Activated CD4-positive, alpha-beta memory T cell treated with anti-CD3 and anti-CD28 coated beads, Interleukin-2, amount 10 ng/mL, durations not matched to agents 7 days and 5 days (primary cell): ENCODE measurements at regions of chr1 and their contacts with region 1.

Region 1: DNA sequence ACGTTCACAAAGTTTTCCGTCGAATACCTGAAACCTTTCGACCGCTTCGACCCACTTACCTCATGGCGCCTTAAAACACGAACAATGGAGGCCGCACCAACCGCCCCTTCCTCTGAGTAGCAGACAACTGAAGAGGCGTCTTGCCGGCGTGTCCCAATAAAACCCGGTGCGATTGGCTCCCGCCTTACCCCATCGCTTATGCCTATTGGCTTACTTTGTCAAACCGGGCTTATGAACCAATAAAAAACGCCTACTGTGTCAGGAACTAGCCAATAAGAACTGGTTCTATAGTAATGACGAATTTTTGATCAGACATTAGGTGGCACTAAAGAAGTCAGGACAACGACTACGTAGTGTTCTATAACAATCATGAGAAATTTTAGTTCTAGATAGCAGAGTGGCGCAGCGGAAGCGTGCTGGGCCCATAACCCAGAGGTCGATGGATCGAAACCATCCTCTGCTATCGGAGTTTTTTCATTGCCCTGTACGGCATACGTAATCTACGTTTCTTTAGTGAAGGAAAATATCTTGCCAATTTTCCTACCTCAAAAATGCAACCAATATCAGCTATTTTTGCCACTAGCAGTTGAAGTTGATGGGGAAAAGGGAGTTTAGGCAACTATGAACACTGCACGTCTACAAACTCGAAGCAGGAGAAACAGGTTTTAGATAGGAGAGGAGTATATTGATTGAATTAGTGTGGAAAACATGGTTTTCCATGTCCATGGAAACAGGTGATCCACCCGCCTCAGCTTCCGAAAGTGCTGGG is at the start of gene ILF2:
- DNase-seq: peak; percentile 98
- H3K4me3 Mint-ChIP-seq: no peak within 1 kb of the TSS
- H3K27ac Mint-ChIP-seq: no peak within 1 kb of the TSS
- H3K4me1 Mint-ChIP-seq: peaks cover 40% of the 10 kb centered on the region
- H3K27me3 Mint-ChIP-seq: no peaks in the 10 kb centered on the region
- total RNA-seq, gene ILF2: 166 to 169 TPM

Region 2: DNA sequence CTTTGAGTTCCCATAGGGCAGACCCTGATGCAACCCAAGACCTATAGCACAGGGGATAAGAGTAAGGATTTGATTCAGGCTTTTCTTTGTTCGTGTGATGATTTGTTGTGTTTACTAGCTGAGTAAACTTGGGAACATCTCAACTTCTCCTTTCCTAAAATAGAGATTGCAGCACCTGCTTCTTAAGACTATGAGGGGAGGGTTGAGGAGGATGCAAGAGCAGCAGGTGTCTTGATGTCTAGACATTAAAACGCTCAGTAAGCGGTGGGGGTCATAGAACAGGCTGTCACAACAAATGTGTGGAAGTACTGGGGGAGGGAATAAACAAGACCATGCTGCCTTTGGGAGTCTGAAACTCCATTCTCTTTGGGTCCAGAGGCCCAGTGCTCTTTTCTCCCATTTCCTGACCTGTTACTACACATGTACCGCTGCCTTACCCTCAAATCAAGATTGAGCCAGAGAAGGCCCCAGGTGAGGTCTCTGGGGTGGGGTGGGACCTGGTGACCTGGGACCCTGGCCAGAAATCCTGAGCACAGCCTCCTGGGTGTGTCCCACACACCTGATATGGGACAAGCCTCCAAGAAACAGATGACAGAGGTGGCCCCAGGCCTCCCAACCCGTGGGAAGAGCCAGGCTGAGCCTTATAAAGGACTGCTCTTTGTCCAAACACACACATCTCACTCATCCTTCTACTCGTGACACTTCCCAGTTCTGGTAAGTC is 255.0 kb before region 1 on chr1 and contains the start of gene S100A7A:
- CTCF ChIA-PET with region 1: no interaction called
- POLR2A ChIA-PET with region 1: no interaction called
- DNase-seq: no peak
- H3K4me3 Mint-ChIP-seq: no peak within 1 kb of the TSS
- H3K27ac Mint-ChIP-seq: no peak within 1 kb of the TSS
- H3K4me1 Mint-ChIP-seq: no peaks in the 10 kb centered on the region
- H3K27me3 Mint-ChIP-seq: peaks cover 7% of the 10 kb centered on the region
- total RNA-seq, gene S100A7A: not detected

Region 3: DNA sequence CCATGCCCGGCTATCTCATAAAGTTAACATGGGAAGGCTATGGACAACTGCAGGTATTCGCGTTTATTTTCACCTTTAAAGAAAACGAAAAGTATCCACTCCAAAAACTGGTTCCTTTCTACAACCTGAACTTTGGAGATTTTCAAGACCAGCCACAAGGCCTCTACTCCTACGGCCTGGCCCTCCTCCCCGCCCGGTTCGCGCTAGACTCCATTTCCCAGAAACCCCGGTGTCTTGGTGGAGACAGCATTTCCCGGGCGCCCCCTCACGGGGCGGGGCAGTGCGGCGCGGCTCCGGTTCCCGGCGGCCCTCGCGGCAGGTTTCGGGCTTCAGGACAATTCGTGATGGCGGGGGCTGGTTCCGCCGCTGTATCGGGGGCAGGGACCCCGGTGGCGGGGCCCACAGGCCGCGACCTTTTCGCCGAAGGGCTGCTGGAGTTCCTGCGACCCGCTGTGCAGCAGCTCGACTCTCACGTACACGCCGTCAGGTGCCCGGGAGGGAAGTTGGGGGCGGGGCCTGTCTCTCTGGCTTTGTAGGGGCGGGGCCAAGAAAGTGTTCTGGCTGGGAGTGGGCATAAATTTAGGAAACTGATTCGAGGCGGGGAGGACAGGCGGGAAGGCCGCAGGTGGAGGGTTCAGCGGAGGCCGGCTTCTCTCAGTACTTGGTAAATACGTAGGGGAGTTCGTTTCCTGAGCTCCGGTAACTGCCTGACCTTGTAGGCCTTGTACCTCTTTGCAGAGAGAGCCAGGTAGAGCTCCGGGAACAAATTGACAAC is 12.5 kb before region 1 on chr1 and contains the start of gene SNAPIN:
- CTCF ChIA-PET with region 1: interaction called, 4 read pairs
- POLR2A ChIA-PET with region 1: interaction called, 16 read pairs
- DNase-seq: peak; percentile 93
- H3K4me3 Mint-ChIP-seq: peak within 1 kb of the TSS; percentile 95
- H3K27ac Mint-ChIP-seq: peak within 1 kb of the TSS; percentile 90
- H3K4me1 Mint-ChIP-seq: peaks cover 24% of the 10 kb centered on the region
- H3K27me3 Mint-ChIP-seq: no peaks in the 10 kb centered on the region
- total RNA-seq, gene SNAPIN: 35.0 to 35.6 TPM

Region 4: GRCh38 chr1:153688276-153688675 is 17.2 kb after region 1 on chr1:
- CTCF ChIA-PET with region 1: no interaction called
- POLR2A ChIA-PET with region 1: no interaction called
- DNase-seq: no peak
- H3K4me3 Mint-ChIP-seq: no peak overlapping the region
- H3K27ac Mint-ChIP-seq: no peak overlapping the region
- H3K4me1 Mint-ChIP-seq: no peaks in the 10 kb centered on the region
- H3K27me3 Mint-ChIP-seq: peaks cover 16% of the 10 kb centered on the region

Region 5: DNA sequence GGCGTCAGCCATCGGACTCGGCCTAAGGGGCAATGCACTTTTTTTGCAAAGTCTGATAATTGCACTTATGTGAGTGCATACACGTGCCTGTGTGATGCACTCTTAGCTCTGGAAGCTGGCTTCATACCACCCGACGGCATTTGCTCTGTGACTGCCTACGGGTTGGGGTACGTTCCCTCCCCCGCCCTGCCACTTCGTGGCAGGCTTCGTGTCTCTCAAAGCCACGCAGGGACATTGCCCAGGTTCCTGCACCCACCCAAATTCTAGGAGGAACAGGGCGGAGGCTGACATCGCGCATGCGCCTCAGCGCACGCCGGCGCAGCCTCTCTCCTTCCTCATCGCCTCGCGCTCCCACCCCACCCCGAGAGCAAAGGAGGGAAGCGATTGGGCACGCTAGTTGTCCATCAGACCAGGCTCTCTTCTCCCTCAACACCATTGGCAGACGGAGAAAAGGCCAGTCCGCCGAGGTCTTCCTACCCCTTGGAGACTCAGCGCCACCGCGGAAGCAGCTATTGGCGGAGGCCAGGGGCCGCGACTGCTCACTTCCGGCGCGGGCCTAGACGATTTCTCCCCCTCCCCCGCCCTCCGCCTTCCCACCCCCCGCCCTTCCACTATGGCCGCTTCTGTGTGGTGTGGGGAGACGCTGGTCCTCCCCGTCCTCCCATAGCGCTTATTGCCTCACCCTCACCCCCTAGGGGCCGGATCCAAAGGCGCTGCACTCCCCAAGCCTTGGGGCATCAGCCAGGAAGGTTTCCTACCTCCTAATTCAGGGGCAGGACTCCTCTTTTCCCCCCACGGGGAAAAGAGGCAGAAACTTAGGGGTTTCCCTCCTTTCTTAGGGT is 56.6 kb after region 1 on chr1 and contains the start of gene INTS3:
- CTCF ChIA-PET with region 1: interaction called, 4 read pairs
- POLR2A ChIA-PET with region 1: interaction called, 13 read pairs
- DNase-seq: peak; percentile 100
- H3K4me3 Mint-ChIP-seq: peak within 1 kb of the TSS; percentile 90
- H3K27ac Mint-ChIP-seq: peak within 1 kb of the TSS; percentile 93
- H3K4me1 Mint-ChIP-seq: peaks cover 42% of the 10 kb centered on the region
- H3K27me3 Mint-ChIP-seq: no peaks in the 10 kb centered on the region
- total RNA-seq, gene INTS3: 46.9 to 50.5 TPM